Right ventricle myocardium inferior (tissue), 1 donor: ENCODE measurements at regions of chr6 and their contacts with region 1.

Region 1: GRCh38 chr6:108039681-108040080 is 34.9 kb downstream of the OSTM1 start:
- DNase-seq: no peak
- ATAC-seq: no peak

Region 2: GRCh38 chr6:107806691-107807090 is 233.0 kb before region 1 on chr6:
- intact Hi-C with region 1: no loop called
- DNase-seq: no peak
- ATAC-seq: no peak

Region 3: DNA sequence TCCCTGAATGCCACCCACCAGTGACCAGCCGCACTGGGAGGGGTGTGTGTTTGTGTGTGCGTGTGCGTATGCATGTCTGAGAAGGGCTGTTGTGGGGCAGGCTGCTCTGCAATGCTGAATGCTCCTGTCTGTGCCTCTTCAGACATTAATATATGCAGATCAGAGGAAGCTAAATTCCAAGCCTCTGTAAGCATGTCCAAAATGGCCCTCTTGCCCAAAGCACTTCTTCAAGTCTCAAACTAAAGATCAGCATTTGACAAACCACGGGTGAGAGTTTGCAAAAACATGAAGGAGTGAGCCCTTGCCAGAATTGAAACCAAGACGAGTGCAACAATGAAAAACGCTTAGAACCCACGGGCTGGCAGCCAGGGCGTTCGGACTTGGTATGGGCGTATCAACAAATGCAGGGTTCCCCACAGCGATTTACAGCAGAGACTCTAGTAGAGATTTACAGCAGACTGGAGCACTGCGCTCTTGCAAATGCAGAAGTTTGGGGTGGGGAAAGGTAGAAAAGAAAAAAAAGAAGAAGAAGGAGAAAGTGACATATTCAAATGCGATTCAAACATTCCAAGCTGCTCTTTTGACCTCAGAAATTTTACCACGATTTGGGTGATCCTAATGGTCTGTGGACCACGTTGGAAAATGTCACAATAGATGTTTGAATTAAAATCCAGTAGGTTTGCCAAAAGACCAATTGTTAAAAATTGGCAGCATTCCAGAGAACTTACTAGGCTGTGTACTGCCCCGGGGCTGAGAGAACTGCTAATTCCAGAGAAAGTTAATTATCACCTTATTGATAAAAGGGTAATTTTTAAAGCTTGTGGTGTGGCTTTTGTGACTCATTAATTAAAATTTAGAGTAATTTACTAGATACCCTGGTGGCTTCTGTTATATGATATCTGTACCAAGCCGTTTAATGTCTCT is 219.1 kb before region 1 on chr6:
- intact Hi-C with region 1: no loop called
- DNase-seq: no peak
- ATAC-seq: no peak

Region 4: DNA sequence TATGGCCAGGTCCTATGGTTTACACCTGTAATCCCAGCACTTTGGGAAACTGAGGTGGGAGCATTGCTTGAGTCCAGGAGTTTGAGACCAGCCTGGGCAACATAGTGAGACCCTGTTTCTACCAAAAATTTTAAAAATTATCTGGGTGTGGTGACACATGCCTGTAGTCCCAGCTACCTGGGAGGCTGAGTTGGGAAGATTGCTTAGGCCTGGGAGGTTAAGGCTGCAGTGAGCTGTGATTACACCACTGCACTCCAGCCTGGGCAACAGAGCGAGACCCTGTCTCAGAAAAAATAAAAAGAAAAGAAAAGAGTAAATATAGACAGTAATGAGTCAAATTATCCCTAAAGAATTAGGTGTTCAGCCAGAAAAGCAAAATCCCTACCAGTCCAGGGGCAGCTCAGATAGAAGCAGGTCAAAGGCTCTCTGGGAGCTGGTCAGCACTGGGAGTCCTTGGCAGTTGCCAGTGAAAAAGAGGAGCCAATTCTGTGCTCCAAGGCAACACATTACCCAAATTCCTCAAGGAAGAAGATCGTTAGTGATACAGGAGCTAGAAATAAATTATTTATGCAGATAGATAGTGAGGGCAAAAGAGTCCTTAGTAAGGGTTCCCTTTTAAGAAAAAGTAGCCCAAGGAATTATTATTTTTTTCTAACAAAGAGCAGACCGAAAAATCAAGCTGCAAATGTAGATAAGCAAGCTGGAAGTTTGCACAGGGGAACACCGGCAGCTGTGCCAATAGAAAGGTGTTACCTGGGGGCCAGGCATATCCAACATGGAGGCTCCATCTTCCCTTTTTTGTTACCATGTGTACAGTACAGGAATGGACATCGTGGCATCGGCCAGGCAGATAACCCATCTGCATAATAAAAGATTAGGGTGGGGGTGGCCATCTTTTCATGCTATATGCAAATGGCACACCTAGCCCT is 50.3 kb before region 1 on chr6:
- intact Hi-C with region 1: loop called (anchors 10 kb)
- DNase-seq: no peak
- ATAC-seq: no peak